WTC11 (cell line): ENCODE measurements at regions of chr12 and their contacts with region 1.

Region 1: GRCh38 chr12:32896432-32897273 is at the start of gene PKP2:
- DNase-seq: peak; percentile 85
- ATAC-seq: peak; percentile 74
- H3K4me3 Mint-ChIP-seq: peak within 1 kb of the TSS; percentile 94
- H3K27ac Mint-ChIP-seq: peak within 1 kb of the TSS; percentile 95
- H3K4me1 Mint-ChIP-seq: peaks cover 52% of the 10 kb centered on the region
- H3K27me3 Mint-ChIP-seq: peaks cover 10% of the 10 kb centered on the region
- CTCF ChIP-seq: no peak
- total RNA-seq, gene PKP2: 21.7 to 22.0 TPM (median 21.9 TPM) in 3 replicates

Region 2: GRCh38 chr12:32926963-32927362 is 30.3 kb after region 1 on chr12:
- CTCF ChIA-PET with region 1: no interaction called
- POLR2A ChIA-PET with region 1: interaction called, 11 read pairs
- DNase-seq: no peak
- ATAC-seq: no peak
- H3K4me3 Mint-ChIP-seq: no peak overlapping the region
- H3K27ac Mint-ChIP-seq: no peak overlapping the region
- H3K4me1 Mint-ChIP-seq: no peaks in the 10 kb centered on the region
- H3K27me3 Mint-ChIP-seq: no peaks in the 10 kb centered on the region; the same call in 1 of the 2 replicates
- CTCF ChIP-seq: no peak

Region 3: DNA sequence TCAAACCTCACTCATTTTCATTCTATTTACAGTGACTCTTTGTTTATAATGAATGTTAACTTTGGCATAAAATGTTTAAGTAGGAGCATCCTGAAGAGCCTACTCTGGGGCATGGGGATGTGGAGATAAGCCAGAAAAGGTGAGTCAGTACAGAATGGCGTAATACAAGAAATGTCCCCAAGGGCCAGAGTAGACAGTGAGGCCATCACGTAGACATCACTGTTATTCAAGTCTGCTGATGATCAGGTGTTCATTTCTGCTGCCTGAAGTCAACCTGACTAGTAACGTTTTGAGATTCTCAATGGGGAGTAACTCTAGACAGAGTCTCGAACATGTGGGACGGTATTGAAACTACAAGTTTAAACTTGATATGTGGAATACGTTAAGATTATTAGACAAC is 47.5 kb after region 1 on chr12:
- CTCF ChIA-PET with region 1: no interaction called
- POLR2A ChIA-PET with region 1: no interaction called
- DNase-seq: no peak
- ATAC-seq: no peak
- H3K4me3 Mint-ChIP-seq: no peak overlapping the region
- H3K27ac Mint-ChIP-seq: no peak overlapping the region
- H3K4me1 Mint-ChIP-seq: no peaks in the 10 kb centered on the region; the same call in 1 of the 2 replicates
- H3K27me3 Mint-ChIP-seq: no peaks in the 10 kb centered on the region
- CTCF ChIP-seq: no peak